Calu3 (cell line): ENCODE measurements at regions of chr6 and their contacts with region 1.

Region 1: GRCh38 chr6:83114164-83114563 is 46.7 kb downstream of the DOP1A start:
- DNase-seq: no peak
- H3K4me3 Mint-ChIP-seq: no peak overlapping the region
- H3K27ac Mint-ChIP-seq: peak overlapping the region; percentile 12
- H3K4me1 Mint-ChIP-seq: peaks cover 8% of the 10 kb centered on the region
- H3K27me3 Mint-ChIP-seq: no peaks in the 10 kb centered on the region
- CTCF ChIP-seq: no peak

Region 2: GRCh38 chr6:83031689-83032088 is 82.5 kb before region 1 on chr6:
- CTCF ChIA-PET with region 1: no interaction called
- intact Hi-C with region 1: no loop called
- DNase-seq: no peak
- H3K4me3 Mint-ChIP-seq: no peak overlapping the region
- H3K27ac Mint-ChIP-seq: no peak overlapping the region
- H3K4me1 Mint-ChIP-seq: no peaks in the 10 kb centered on the region
- H3K27me3 Mint-ChIP-seq: no peaks in the 10 kb centered on the region
- CTCF ChIP-seq: no peak

Region 3: DNA sequence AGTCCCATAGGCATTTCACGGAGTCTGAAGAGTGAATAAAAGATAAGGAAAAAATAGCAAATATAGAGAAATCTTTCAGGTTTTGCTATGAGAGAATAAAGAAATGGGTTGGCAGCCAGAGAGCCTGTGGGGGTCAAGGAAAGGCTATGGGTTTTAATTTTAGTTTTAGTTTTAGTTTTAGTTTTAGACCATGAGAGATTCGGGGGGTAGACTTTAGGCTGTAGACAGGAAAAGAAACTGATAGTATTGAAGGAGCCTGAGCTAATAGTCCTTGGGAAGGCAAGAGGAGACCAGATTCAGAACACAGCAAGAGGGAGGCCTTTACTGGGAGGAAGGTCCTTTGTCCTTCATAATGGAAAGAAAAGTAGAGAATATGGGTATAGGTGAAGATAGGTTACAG is 27.4 kb before region 1 on chr6:
- CTCF ChIA-PET with region 1: no interaction called
- intact Hi-C with region 1: loop called (anchors 1 kb)
- DNase-seq: no peak
- H3K4me3 Mint-ChIP-seq: no peak overlapping the region
- H3K27ac Mint-ChIP-seq: no peak overlapping the region
- H3K4me1 Mint-ChIP-seq: no peaks in the 10 kb centered on the region
- H3K27me3 Mint-ChIP-seq: no peaks in the 10 kb centered on the region
- CTCF ChIP-seq: no peak